ENCODE measurements at regions of chr4 and their contacts with region 1.

Region 1: GRCh38 chr4:139301113-139301820 is at the start of gene NAA15:
- DNase-seq: peak; percentile 97
- H3K4me3 ChIP-seq: peak within 1 kb of the TSS; percentile 76 to 94 (median 94)
- H3K27ac ChIP-seq: peak within 1 kb of the TSS; percentile 80
- H3K4me1 ChIP-seq: peaks cover 25% of the 10 kb centered on the region
- H3K27me3 ChIP-seq: no peaks in the 10 kb centered on the region
- CTCF ChIP-seq: no peak
- total RNA-seq, gene NAA15: 35.5 to 76.3 TPM

Region 2: DNA sequence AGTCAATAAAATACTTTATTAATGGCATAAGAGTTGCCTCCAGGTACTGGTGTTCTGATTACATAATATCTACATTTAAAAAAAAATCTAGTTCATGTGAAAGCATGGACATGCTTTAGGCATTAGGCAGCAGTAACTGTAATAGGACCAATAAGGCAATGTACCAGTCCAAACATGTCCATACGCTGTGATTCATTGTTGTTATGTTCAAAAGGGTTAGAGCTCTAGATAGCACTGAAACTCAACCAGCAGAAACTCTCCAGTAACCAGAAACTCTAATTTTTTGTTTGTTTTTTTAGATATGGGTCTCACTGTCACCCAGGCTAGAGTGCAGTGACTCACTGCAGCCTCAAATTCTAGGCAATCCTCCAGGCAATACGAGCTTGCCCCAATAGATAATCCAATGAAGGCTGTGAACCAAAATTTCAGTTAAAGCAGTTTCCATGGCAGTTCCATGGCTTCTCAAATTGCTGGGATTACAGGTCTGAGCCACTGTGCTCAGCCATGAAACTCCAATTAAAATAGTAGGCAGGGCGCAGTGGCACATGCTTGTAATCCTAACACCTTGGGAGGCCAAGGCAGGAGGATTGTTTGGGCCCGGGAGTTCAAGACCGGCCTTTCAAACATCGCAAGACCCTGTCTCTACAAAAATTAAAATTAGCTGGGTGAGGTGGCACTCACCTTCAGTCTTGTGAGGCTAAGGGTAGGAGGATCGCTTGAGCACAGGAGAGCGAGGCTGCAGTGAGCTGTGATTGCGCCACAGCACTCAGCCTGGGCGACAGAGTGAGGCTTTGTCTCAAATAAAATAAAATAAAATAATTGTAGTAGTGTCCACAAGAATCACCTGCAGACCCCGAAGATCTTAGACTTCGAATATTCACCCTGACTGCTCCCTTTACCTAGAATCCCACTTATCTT is 57.6 kb before region 1 on chr4:
- CTCF ChIA-PET with region 1: interaction called, 4 read pairs
- dilution Hi-C with region 1: no loop called
- in situ Hi-C with region 1: no loop called
- intact Hi-C with region 1: loop called (anchors 1 kb)
- DNase-seq: peak; percentile 100
- H3K4me3 ChIP-seq: no peak overlapping the region
- H3K27ac ChIP-seq: peak overlapping the region; percentile 89
- H3K4me1 ChIP-seq: peaks cover 37% of the 10 kb centered on the region
- H3K27me3 ChIP-seq: no peaks in the 10 kb centered on the region
- CTCF ChIP-seq: no peak

Measured in mammary epithelial cell (primary cell).